Caco-2 (cell line): ENCODE measurements at regions of chr13 and their contacts with region 1.

Region 1: DNA sequence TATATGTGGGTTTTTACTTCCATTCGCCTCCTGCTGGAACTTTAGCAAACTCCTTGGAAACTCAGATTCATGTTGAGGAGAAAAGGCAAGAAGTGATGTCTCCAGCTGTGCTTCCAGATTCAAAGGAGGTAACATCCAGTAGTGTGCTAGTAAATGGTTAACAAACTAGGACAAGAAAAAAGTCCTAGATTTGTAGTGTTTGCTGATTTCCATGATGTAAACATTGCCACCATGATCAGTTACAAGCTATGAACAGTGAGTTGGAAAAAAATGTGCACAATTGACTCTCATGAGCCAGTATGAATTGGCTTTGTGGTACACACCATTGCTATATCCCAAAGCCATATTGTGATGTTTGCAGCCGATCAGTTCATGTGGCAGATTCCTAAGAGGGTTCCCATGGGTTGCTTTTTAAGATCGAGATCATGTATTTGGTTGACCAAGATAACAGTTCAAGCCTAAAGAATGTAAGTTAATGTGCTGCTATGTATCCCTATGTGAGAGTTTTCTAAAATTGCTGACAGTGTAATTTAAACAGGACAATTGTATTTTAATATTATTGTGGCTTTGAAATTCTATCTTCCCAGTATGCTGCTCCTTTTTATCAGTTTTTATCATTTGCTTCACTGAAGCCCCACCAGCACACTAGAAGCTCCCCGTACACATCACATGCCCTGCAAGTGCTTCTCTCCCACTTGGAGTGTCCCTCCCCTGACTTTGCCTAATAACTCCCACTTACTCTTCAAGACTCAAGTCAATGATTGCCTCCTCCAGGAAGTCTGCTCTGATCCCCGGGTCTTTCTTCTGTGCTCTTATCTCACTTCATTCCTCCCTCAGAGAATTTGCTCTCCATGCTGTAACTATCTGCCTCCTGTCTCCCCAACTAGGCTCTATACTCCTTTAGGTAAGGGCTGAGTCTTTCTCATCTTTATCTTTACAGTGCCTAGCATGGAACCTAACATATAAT is 148.3 kb downstream of the RGCC start:
- DNase-seq: peak; percentile 41 to 62
- H3K4me3 ChIP-seq: no peak overlapping the region
- H3K4me3 Mint-ChIP-seq: peak overlapping the region; percentile 56
- H3K27ac Mint-ChIP-seq: peak overlapping the region; percentile 87
- H3K4me1 ChIP-seq: peaks cover 77% of the 10 kb centered on the region
- H3K4me1 Mint-ChIP-seq: peaks cover 53% of the 10 kb centered on the region
- H3K27me3 ChIP-seq: no peaks in the 10 kb centered on the region
- H3K27me3 Mint-ChIP-seq: no peaks in the 10 kb centered on the region
- CTCF ChIP-seq: no peak

Region 2: GRCh38 chr13:40671956-40672764 is 933.4 kb before region 1 on chr13:
- CTCF ChIA-PET with region 1: no interaction called
- POLR2A ChIA-PET with region 1: no interaction called
- intact Hi-C with region 1: no loop called
- DNase-seq: no peak
- H3K4me3 ChIP-seq: no peak overlapping the region
- H3K4me3 Mint-ChIP-seq: no peak overlapping the region
- H3K27ac Mint-ChIP-seq: no peak overlapping the region
- H3K4me1 ChIP-seq: no peaks in the 10 kb centered on the region
- H3K4me1 Mint-ChIP-seq: peaks cover 15% of the 10 kb centered on the region
- H3K27me3 ChIP-seq: no peaks in the 10 kb centered on the region
- H3K27me3 Mint-ChIP-seq: no peaks in the 10 kb centered on the region
- CTCF ChIP-seq: no peak

Region 3: DNA sequence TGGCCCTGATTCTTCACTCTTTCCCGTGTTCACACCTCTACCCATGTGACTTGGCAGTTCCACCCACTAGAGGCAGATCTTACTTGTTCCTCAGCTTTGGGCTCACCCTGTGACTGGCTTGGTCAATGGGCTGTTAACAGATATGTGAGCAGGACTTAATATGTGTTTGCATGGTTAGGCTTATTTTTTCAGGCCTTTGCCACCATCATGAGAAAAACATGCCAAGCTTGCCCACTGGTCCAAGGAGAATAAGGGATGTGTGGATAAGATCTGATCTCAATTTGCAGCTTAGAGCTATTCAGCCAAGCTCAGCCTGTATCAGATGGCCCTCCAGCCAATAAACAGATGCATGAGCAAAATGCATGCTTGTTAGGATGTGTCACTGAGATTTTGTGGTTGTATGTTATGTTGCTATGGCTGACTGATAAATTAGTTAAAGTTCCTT is 100.3 kb before region 1 on chr13:
- CTCF ChIA-PET with region 1: no interaction called
- POLR2A ChIA-PET with region 1: no interaction called
- intact Hi-C with region 1: no loop called
- DNase-seq: no peak
- H3K4me3 ChIP-seq: no peak overlapping the region
- H3K4me3 Mint-ChIP-seq: no peak overlapping the region
- H3K27ac Mint-ChIP-seq: no peak overlapping the region
- H3K4me1 ChIP-seq: no peaks in the 10 kb centered on the region
- H3K4me1 Mint-ChIP-seq: no peaks in the 10 kb centered on the region
- H3K27me3 ChIP-seq: no peaks in the 10 kb centered on the region
- H3K27me3 Mint-ChIP-seq: no peaks in the 10 kb centered on the region
- CTCF ChIP-seq: no peak

Region 4: DNA sequence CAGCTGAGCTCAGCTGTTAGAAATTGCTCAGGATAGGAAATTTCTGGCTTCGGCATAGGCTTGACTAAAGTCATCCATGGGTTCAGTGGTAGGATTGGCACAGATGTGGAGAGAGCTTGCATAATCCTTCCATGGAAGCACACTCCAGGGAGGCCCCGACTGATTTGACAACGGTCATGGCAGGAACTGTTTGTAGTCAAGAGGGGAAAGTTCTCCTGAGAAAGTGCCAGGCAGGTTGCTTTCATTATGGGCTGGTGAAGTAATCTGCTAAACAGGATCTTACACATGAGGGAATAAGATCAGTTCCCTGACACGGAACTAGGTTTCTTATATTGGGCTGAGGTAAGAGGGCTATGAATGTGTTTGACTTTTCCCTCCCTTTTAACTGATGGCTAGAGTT is 28.2 kb before region 1 on chr13:
- CTCF ChIA-PET with region 1: no interaction called
- POLR2A ChIA-PET with region 1: no interaction called
- intact Hi-C with region 1: no loop called
- DNase-seq: no peak
- H3K4me3 ChIP-seq: no peak overlapping the region
- H3K4me3 Mint-ChIP-seq: no peak overlapping the region
- H3K27ac Mint-ChIP-seq: no peak overlapping the region
- H3K4me1 ChIP-seq: no peaks in the 10 kb centered on the region; the same call in 1 of the 2 replicates
- H3K4me1 Mint-ChIP-seq: no peaks in the 10 kb centered on the region
- H3K27me3 ChIP-seq: no peaks in the 10 kb centered on the region
- H3K27me3 Mint-ChIP-seq: no peaks in the 10 kb centered on the region
- CTCF ChIP-seq: no peak

Region 5: DNA sequence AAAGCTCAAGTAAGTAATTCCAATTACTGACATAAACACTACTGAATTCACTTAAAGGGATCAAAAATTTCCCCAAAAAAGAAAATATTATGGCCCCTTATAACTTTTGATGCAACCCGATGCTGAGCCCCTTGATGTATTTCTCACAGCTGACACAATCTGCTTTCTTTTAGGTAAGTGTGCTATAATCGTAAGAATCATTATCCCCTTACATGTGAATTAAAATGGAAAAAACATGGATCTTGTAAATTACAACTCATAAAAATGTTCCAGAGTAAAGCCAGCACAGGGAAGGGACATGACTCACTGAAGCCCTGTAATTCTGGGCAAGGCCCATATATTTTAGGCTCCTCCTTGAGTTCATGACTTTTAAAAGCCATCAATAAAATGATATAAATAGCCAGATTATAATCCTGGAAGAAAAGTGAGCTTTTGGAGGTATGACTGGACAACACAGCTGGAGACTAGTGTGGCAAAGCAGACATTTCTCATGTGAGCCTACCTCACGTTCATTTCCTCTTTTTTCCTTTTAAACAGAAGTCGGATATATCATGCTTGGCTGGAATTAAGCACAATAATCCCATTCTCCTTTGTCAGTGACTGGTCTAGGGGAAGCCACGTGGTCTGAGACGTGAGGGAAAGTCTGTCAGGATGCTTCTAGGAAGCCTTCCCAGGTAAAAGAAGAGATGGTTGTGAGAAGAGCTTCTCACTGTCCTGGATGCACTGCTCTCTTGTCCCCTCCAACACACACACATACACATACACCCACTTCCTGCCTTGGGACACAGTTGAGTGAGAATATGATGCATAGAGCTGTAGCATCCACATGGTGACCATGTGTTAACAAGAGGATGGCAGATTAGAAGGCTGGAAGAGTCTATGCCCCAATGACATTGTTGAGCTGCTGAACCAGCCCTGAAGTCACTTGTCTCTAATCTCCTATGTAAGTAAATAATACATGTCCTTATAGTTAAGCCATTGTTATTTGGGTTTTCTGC is 17.1 kb after region 1 on chr13:
- CTCF ChIA-PET with region 1: interaction called, 3 read pairs
- POLR2A ChIA-PET with region 1: interaction called, 5 read pairs
- intact Hi-C with region 1: loop called (anchors 1 kb)
- DNase-seq: no peak
- H3K4me3 ChIP-seq: no peak overlapping the region
- H3K4me3 Mint-ChIP-seq: no peak overlapping the region
- H3K27ac Mint-ChIP-seq: peak overlapping the region; percentile 86
- H3K4me1 ChIP-seq: peaks cover 38% of the 10 kb centered on the region
- H3K4me1 Mint-ChIP-seq: peaks cover 48% of the 10 kb centered on the region
- H3K27me3 ChIP-seq: no peaks in the 10 kb centered on the region
- H3K27me3 Mint-ChIP-seq: no peaks in the 10 kb centered on the region
- CTCF ChIP-seq: no peak

Region 6: DNA sequence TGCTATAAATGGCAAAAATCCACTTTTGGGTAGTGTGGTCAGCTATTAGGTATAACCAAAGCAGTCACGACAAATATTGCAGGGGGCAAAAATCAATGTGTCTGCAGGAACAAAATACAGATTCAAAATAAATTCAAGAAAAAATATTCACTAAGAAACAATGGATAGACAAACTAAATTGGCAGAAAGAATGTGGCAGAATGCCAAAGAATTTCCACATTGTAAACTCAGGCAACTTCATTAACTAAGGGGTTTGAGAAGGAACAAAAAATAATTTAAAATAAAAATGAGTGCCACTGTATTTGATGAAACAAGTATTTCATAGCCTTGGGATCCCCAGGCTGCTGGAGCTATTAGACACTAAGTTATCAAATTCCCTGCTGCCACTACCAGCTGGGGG is 162.2 kb after region 1 on chr13:
- CTCF ChIA-PET with region 1: no interaction called
- POLR2A ChIA-PET with region 1: no interaction called
- intact Hi-C with region 1: no loop called
- DNase-seq: no peak
- H3K4me3 ChIP-seq: no peak overlapping the region
- H3K4me3 Mint-ChIP-seq: no peak overlapping the region
- H3K27ac Mint-ChIP-seq: no peak overlapping the region
- H3K4me1 ChIP-seq: no peaks in the 10 kb centered on the region
- H3K4me1 Mint-ChIP-seq: no peaks in the 10 kb centered on the region
- H3K27me3 ChIP-seq: no peaks in the 10 kb centered on the region
- H3K27me3 Mint-ChIP-seq: no peaks in the 10 kb centered on the region
- CTCF ChIP-seq: no peak